ENCODE measurements at regions of chr3 and their contacts with region 1.

Region 1: GRCh38 chr3:4571690-4572334 is 78.7 kb downstream of the ITPR1 start:
- DNase-seq: peak; percentile 69
- ATAC-seq: peak; percentile 96
- H3K4me3 ChIP-seq: 0 out of 6 replicates have a peak overlapping the region, but pooled peaks of 1 of the 3 experiments have one; percentile 29
- H3K27ac ChIP-seq: peak overlapping the region; percentile 73
- H3K4me1 ChIP-seq: peaks cover 33% of the 10 kb centered on the region
- H3K27me3 ChIP-seq: no peaks in the 10 kb centered on the region
- CTCF ChIP-seq: peak; percentile 74
- EP300 ChIP-seq: no peak
- POLR2A ChIP-seq: no peak
- RAD21 ChIP-seq: peak; percentile 71

Region 2: GRCh38 chr3:4350789-4351163 is 221.0 kb before region 1 on chr3:
- CTCF ChIA-PET with region 1: interaction called, 12 read pairs
- POLR2A ChIA-PET with region 1: no interaction called
- in situ Hi-C with region 1: loop called (anchors 10 kb)
- intact Hi-C with region 1: loop called (anchors 1 kb)
- DNase-seq: peak; percentile 53
- ATAC-seq: peak; percentile 76
- H3K4me3 ChIP-seq: no peak overlapping the region
- H3K27ac ChIP-seq: no peak overlapping the region
- H3K4me1 ChIP-seq: peaks cover 11% of the 10 kb centered on the region
- H3K27me3 ChIP-seq: no peaks in the 10 kb centered on the region
- CTCF ChIP-seq: peak; percentile 75
- EP300 ChIP-seq: no peak
- POLR2A ChIP-seq: no peak
- RAD21 ChIP-seq: peak; percentile 46; the same call in 1 of the 2 replicates

Region 3: GRCh38 chr3:4421121-4421520 is 150.7 kb before region 1 on chr3:
- CTCF ChIA-PET with region 1: no interaction called
- POLR2A ChIA-PET with region 1: no interaction called
- in situ Hi-C with region 1: no loop called
- intact Hi-C with region 1: loop called (anchors 2 kb)
- DNase-seq: no peak
- ATAC-seq: no peak
- H3K4me3 ChIP-seq: no peak overlapping the region
- H3K27ac ChIP-seq: no peak overlapping the region
- H3K4me1 ChIP-seq: peaks cover 12% of the 10 kb centered on the region
- H3K27me3 ChIP-seq: no peaks in the 10 kb centered on the region
- CTCF ChIP-seq: no peak
- EP300 ChIP-seq: no peak
- POLR2A ChIP-seq: no peak
- RAD21 ChIP-seq: no peak

Region 4: DNA sequence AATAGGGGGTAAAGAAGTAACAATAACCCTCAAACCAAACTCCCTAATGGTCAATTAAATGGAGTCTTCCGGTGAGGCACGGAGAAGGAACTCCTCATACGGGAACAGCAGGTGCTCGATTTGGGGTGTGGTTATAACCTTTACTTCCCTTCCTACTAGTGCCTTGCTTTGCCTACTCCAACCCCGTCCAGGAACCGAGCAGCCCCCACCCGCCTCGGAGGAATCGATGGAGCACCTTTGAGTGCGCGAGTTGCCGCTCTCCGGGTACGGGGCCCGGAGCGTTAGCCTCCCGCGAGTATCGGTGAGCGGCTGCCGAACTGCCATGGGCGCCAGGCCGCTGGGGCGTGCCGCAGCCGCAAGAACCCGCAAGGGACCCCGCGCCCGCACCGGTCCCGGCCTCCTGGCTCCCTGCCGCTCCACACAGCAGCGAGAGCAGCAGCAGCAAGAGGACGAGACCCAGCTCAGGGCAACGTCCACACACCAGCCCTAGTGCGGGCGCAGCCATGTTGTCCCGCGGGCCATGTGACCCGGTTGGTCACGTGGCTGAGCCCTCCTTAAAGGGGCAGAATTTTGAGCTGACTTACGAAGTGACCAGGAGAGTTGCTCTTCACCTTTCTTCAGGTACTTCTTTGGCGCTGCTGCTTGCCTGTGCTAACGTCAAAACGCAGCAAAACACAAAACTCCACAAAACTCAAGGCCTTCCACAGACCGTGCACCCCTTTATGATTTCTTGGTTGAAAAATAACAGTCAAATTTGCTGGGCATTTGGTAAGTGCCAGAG is 104.9 kb before region 1 on chr3 and contains the start of gene SUMF1:
- CTCF ChIA-PET with region 1: no interaction called
- POLR2A ChIA-PET with region 1: no interaction called
- in situ Hi-C with region 1: no loop called
- intact Hi-C with region 1: loop called (anchors 1 kb)
- DNase-seq: peak; percentile 75
- ATAC-seq: peak; percentile 98
- H3K4me3 ChIP-seq: peak within 1 kb of the TSS; percentile 73 to 85 (median 76)
- H3K27ac ChIP-seq: peak within 1 kb of the TSS; percentile 88
- H3K4me1 ChIP-seq: peaks cover 20% of the 10 kb centered on the region
- H3K27me3 ChIP-seq: peaks cover 0 to 1% of the 10 kb centered on the region in 2 experiments; a peak in 3 of 5 replicates
- CTCF ChIP-seq: no peak
- EP300 ChIP-seq: no peak
- POLR2A ChIP-seq: peak; percentile 91 to 97
- RAD21 ChIP-seq: peak; percentile 68
- total RNA-seq, gene SUMF1: 14.1 and 28.9 TPM in 2 replicates

Region 5: GRCh38 chr3:4512895-4513616 is 58.8 kb before region 1 on chr3:
- CTCF ChIA-PET with region 1: no interaction called
- POLR2A ChIA-PET with region 1: interaction called, 3 read pairs
- in situ Hi-C with region 1: no loop called
- intact Hi-C with region 1: loop called (anchors 1 kb)
- DNase-seq: peak; percentile 95
- ATAC-seq: peak; percentile 96
- H3K4me3 ChIP-seq: peak overlapping the region in 1 of 3 experiments; percentile 41; a peak in 1 of 6 replicates
- H3K27ac ChIP-seq: peak overlapping the region; percentile 76
- H3K4me1 ChIP-seq: peaks cover 59% of the 10 kb centered on the region
- H3K27me3 ChIP-seq: no peaks in the 10 kb centered on the region
- CTCF ChIP-seq: no peak
- EP300 ChIP-seq: peak in 1 of 2 experiments; percentile 66; a peak in 1 of 4 replicates
- POLR2A ChIP-seq: no peak
- RAD21 ChIP-seq: no peak

Region 6: DNA sequence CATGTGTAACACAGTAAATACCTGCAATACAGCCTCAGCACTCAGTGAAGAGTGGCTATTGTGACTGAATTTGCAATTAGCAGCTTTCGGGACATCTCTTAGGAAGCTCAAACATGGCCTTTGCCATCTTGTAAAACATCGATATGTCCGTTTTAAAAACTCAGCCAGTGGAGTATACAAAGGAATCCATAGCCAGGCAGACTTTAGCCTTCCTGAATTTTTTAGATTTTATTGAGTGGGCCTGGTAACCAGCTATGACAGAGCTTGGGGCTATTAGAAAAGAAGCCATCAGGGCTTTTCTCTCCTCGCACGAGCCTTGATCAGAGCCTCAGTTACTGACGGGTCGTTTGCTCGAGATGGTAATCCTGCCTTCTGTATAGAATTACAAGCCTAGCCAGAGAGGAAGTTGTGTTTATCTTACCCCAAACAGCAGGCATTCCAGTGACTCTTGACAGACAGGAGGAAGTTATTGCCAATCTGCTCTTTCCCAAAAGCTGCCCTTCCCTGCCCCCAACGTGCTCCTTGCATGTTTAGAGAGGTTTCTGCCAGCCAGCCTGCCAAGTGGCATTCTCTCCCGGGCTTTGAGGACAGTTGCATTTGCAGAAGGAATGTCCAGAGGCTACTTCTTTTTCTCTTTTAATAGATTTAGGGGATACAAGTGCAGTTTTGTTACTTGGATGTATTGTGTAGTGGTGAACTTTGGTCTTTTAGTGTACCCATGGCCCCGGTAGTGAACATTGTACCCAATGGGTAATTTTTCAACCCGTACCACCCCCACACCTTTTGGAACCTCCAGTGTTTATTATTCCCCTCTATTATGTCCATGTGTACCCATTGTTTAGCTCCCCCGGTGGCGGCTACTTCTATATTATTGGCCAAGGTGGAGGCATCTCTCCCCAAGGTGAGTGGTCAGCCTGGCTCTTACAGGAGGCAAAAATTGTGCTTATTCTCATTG is 38.0 kb before region 1 on chr3:
- CTCF ChIA-PET with region 1: no interaction called
- POLR2A ChIA-PET with region 1: no interaction called
- in situ Hi-C with region 1: no loop called
- intact Hi-C with region 1: loop called (anchors 1 kb)
- DNase-seq: peak; percentile 48
- ATAC-seq: peak; percentile 87
- H3K4me3 ChIP-seq: peak overlapping the region; percentile 33 to 52 (median 49)
- H3K27ac ChIP-seq: peak overlapping the region; percentile 72
- H3K4me1 ChIP-seq: peaks cover 33% of the 10 kb centered on the region
- H3K27me3 ChIP-seq: no peaks in the 10 kb centered on the region
- CTCF ChIP-seq: 0 out of 2 replicates have a peak, but pooled peaks have one; percentile 11
- EP300 ChIP-seq: peak in 1 of 2 experiments; percentile 27; a peak in 1 of 4 replicates
- POLR2A ChIP-seq: no peak
- RAD21 ChIP-seq: no peak

Region 7: GRCh38 chr3:4633078-4634004 is 61.5 kb after region 1 on chr3:
- CTCF ChIA-PET with region 1: interaction called, 3 read pairs
- POLR2A ChIA-PET with region 1: no interaction called
- in situ Hi-C with region 1: no loop called
- intact Hi-C with region 1: loop called (anchors 1 kb)
- DNase-seq: peak; percentile 52
- ATAC-seq: peak; percentile 82
- H3K4me3 ChIP-seq: no peak overlapping the region
- H3K27ac ChIP-seq: no peak overlapping the region
- H3K4me1 ChIP-seq: no peaks in the 10 kb centered on the region
- H3K27me3 ChIP-seq: no peaks in the 10 kb centered on the region
- CTCF ChIP-seq: peak; percentile 86
- EP300 ChIP-seq: no peak
- POLR2A ChIP-seq: no peak
- RAD21 ChIP-seq: peak; percentile 70